CD4-positive, alpha-beta T cell (primary cell): ENCODE measurements at regions of chr9 and their contacts with region 1.

Region 1: DNA sequence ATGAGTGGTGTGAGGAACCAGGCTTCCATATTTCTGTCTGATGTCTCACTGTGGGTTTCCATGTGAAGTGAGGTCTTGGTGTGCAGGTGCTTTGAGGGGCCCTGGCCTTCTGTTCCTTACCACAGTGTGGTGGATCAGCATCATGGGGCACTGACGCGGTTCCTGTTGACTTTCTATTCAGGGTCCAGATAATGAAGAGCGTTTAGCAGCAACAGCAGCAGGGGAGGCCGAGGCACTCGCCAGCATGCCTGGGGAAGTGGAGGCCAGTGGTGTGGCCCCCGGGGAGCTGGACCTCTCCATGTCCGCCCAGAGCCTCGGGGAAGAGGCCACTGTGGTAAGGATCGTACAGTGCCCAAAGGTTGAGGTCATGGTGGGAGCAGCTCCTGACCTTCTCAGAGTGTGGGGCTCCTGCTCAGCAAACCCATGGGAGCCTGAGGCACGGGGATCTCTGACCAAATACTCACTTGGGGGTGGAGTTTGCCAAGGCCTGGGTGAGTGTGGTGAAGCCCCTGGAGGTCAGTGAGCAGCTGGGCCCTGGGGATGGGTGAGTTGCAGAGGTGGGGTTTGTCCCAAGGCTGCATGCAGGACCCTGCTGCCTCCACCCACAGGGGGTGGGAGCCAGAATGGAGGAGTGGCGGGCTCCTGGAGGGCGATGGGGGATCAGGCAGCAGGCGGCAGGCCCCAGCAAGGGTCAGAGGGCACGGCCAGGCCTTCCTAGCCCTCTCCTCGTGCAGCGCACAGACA is 61.2 kb downstream of the COL15A1 start:
- DNase-seq: no peak
- ATAC-seq: no peak
- H3K4me3 ChIP-seq: no peak overlapping the region
- H3K4me3 Mint-ChIP-seq: no peak overlapping the region
- H3K27ac ChIP-seq: no peak overlapping the region
- H3K27ac Mint-ChIP-seq: no peak overlapping the region
- H3K4me1 ChIP-seq: peaks cover 11% of the 10 kb centered on the region
- H3K4me1 Mint-ChIP-seq: peaks cover 25% of the 10 kb centered on the region
- H3K27me3 ChIP-seq: no peaks in the 10 kb centered on the region
- H3K27me3 Mint-ChIP-seq: no peaks in the 10 kb centered on the region
- CTCF ChIP-seq: no peak

Region 2: DNA sequence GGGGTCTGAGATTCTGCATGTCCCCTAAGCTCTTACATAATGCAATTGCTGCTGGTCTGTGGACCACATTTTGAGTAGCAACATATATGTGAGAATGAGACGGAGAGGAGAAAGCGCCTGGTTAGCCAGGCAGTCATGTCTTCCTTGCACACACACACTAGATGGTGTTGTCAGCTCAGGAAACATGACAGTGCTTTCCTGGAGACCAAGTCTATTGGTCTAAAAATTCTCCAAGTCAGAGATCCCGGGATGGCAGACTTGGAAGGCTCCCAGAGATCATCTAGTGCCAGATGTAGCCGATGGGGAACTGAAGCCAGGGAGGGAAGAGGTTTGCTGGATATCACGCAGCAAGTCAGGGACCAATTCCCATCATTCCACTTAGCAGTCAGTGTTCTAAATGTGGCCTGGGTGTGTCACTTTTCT is 144.0 kb before region 1 on chr9:
- CTCF ChIA-PET with region 1: no interaction called
- POLR2A ChIA-PET with region 1: no interaction called
- intact Hi-C with region 1: no loop called
- DNase-seq: no peak
- ATAC-seq: no peak
- H3K4me3 ChIP-seq: no peak overlapping the region
- H3K4me3 Mint-ChIP-seq: no peak overlapping the region
- H3K27ac ChIP-seq: no peak overlapping the region
- H3K27ac Mint-ChIP-seq: no peak overlapping the region
- H3K4me1 ChIP-seq: no peaks in the 10 kb centered on the region
- H3K4me1 Mint-ChIP-seq: no peaks in the 10 kb centered on the region
- H3K27me3 ChIP-seq: no peaks in the 10 kb centered on the region
- H3K27me3 Mint-ChIP-seq: peaks cover 4% of the 10 kb centered on the region
- CTCF ChIP-seq: no peak

Region 3: DNA sequence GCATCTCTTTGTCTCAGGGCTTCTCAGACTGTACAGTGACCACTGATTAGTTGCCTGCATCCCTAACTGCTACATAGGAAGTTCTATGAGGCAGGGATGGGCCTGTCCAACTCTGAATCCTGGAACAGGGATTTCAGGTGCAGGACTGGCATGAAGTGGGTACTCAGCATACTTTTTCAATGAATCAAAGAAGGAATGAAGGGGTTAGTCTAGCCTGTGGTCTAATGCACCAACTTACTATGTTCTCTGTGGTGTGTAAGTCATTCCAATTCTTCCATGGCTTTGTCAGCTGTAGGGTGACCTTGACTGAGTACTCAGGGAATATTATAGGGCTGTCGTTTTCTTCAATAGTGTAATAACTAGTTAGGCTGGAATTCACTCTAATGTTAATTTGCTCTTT is 52.9 kb before region 1 on chr9:
- CTCF ChIA-PET with region 1: no interaction called
- POLR2A ChIA-PET with region 1: no interaction called
- intact Hi-C with region 1: no loop called
- DNase-seq: no peak
- ATAC-seq: no peak
- H3K4me3 ChIP-seq: no peak overlapping the region
- H3K4me3 Mint-ChIP-seq: no peak overlapping the region
- H3K27ac ChIP-seq: no peak overlapping the region
- H3K27ac Mint-ChIP-seq: no peak overlapping the region
- H3K4me1 ChIP-seq: no peaks in the 10 kb centered on the region
- H3K4me1 Mint-ChIP-seq: no peaks in the 10 kb centered on the region
- H3K27me3 ChIP-seq: peaks cover 8% of the 10 kb centered on the region in 2 experiments
- H3K27me3 Mint-ChIP-seq: peaks cover 43% of the 10 kb centered on the region
- CTCF ChIP-seq: no peak

Region 4: DNA sequence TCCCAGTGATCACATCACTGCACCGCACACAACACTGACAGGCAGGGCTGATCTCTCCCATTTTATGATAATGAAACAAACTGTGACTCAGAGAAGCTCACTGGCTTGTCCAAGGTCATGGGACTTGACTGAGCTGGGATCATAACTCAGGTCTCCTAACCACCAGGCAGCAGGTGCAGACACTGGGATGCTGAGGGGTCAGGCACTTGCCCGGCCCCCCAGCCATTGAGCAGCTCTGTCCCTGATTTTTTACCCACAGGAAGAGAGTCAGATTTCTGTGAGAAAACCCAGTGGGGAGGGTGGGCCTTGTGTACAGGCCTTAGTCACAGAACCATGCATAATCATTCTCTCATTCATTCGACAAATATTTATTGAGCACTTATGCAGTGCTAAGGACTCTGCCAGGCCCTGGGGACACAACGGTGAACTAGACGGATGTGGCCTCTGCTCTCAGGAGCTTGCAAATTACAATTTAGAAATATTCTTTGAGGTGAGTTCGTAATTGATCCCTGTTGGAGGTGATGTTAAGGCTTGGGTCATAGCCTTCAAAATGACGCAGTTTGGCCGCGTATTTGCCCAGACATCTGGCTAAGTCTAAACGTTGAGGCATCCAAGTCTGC is 45.5 kb after region 1 on chr9:
- CTCF ChIA-PET with region 1: no interaction called
- POLR2A ChIA-PET with region 1: no interaction called
- intact Hi-C with region 1: loop called (anchors 5 kb)
- DNase-seq: no peak
- ATAC-seq: no peak
- H3K4me3 ChIP-seq: no peak overlapping the region
- H3K4me3 Mint-ChIP-seq: no peak overlapping the region
- H3K27ac ChIP-seq: no peak overlapping the region
- H3K27ac Mint-ChIP-seq: no peak overlapping the region
- H3K4me1 ChIP-seq: peaks cover 37% of the 10 kb centered on the region
- H3K4me1 Mint-ChIP-seq: peaks cover 35% of the 10 kb centered on the region
- H3K27me3 ChIP-seq: no peaks in the 10 kb centered on the region
- H3K27me3 Mint-ChIP-seq: no peaks in the 10 kb centered on the region
- CTCF ChIP-seq: no peak

Region 5: GRCh38 chr9:99680191-99680590 is 675.3 kb after region 1 on chr9:
- CTCF ChIA-PET with region 1: no interaction called
- POLR2A ChIA-PET with region 1: no interaction called
- intact Hi-C with region 1: no loop called
- DNase-seq: no peak
- ATAC-seq: no peak
- H3K4me3 ChIP-seq: no peak overlapping the region
- H3K4me3 Mint-ChIP-seq: no peak overlapping the region
- H3K27ac ChIP-seq: no peak overlapping the region
- H3K27ac Mint-ChIP-seq: no peak overlapping the region
- H3K4me1 ChIP-seq: no peaks in the 10 kb centered on the region
- H3K4me1 Mint-ChIP-seq: no peaks in the 10 kb centered on the region
- H3K27me3 ChIP-seq: no peaks in the 10 kb centered on the region
- H3K27me3 Mint-ChIP-seq: no peaks in the 10 kb centered on the region
- CTCF ChIP-seq: no peak